ENCODE measurements at regions of chr9 and their contacts with region 1.

Region 1: DNA sequence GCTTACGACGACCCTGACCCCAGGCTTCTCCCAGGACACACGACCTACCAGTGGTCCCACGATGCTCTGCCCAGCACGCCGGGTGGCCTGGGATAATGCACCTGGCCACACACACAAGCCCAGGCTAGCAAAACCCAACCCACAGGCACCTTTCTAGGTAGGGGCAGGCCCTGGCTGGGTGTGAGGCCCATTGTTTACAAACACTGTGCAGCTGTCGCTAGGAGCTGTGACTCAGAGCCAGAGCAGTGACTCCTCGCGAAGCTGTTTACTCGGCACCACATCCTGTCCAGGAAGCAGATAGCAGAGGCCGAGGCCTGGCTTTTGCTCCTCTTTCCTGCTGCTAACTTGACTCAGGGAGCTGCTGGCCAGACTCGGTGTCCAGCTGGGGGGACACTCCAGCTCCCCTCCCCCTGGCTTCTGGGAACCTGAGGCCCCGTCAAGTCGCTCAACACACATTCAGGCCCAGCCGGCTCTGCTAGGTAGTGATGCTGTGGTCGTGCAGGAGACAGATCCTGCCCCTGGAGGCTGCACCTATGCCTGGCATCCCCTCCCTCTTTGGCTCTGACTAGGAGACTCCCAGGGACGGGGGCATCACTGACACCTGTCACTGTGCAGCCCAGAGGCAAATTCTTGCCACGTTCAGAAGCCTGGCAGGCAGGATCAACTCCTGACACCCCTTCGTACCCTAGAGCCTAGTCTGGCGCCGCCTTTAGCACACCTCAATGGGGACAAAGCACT is 12.8 kb upstream of the RALGDS start:
- DNase-seq: peak; percentile 95
- ATAC-seq: peak; percentile 81
- H3K4me3 Mint-ChIP-seq: peak overlapping the region; percentile 40
- H3K27ac Mint-ChIP-seq: peak overlapping the region; percentile 99
- H3K4me1 Mint-ChIP-seq: peaks cover 90% of the 10 kb centered on the region
- H3K27me3 Mint-ChIP-seq: no peaks in the 10 kb centered on the region

Region 2: DNA sequence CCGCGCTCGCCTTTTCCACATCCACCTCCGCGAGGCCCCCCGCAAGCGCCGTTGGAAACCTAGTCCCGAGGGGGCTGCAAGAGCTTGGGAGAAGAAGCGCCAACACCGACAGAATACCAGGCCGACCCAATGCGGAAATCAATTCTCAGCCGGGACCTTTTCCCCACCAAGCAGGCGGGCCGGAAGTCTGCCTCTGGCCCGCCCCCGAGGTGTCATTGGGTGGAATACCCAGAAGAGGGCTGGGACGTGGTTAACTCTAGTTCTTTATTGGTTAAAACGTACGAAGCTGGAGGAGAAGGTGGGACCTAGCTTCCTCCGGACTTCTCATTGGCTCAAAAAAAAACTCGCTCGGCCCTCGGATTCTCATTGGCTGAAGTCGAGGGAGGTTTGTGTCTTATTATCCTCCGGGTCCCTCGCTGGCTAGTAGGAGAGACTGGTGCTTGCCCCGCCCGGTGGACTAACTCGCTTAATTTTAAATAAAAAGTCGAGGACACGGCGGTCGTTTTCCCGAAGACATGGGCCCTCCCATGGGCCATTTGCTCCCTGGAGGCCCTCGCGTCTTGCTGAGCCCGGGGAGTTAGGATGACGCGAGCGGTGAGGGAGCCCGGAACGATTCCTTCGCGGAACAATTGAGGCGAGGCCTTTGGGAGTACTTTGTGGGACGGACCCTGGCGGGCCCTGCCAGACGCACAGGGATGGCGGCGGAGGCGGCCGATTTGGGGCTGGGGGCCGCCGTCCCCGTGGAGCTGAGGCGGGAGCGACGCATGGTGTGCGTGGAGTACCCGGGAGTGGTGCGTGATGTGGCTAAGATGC is 103.3 kb before region 1 on chr9 and contains the start of gene GTF3C5:
- CTCF ChIA-PET with region 1: no interaction called
- POLR2A ChIA-PET with region 1: interaction called, 16 read pairs
- DNase-seq: peak; percentile 96
- ATAC-seq: peak; percentile 98
- H3K4me3 Mint-ChIP-seq: peak within 1 kb of the TSS; percentile 93
- H3K27ac Mint-ChIP-seq: peak within 1 kb of the TSS; percentile 93
- H3K4me1 Mint-ChIP-seq: peaks cover 34% of the 10 kb centered on the region
- H3K27me3 Mint-ChIP-seq: no peaks in the 10 kb centered on the region
- total RNA-seq, gene GTF3C5: 89.3 to 95.7 TPM

Region 3: GRCh38 chr9:133075925-133076630 is 57.8 kb before region 1 on chr9:
- CTCF ChIA-PET with region 1: no interaction called
- POLR2A ChIA-PET with region 1: no interaction called
- DNase-seq: no peak
- ATAC-seq: no peak
- H3K4me3 Mint-ChIP-seq: no peak overlapping the region
- H3K27ac Mint-ChIP-seq: no peak overlapping the region
- H3K4me1 Mint-ChIP-seq: no peaks in the 10 kb centered on the region
- H3K27me3 Mint-ChIP-seq: peaks cover 18% of the 10 kb centered on the region

Region 4: GRCh38 chr9:133115448-133116345 is 18.2 kb before region 1 on chr9:
- CTCF ChIA-PET with region 1: interaction called, 6 read pairs
- POLR2A ChIA-PET with region 1: interaction called, 17 read pairs
- DNase-seq: peak; percentile 66
- ATAC-seq: peak; percentile 62
- H3K4me3 Mint-ChIP-seq: no peak overlapping the region
- H3K27ac Mint-ChIP-seq: peak overlapping the region; percentile 83
- H3K4me1 Mint-ChIP-seq: peaks cover 79% of the 10 kb centered on the region
- H3K27me3 Mint-ChIP-seq: no peaks in the 10 kb centered on the region

Region 5: DNA sequence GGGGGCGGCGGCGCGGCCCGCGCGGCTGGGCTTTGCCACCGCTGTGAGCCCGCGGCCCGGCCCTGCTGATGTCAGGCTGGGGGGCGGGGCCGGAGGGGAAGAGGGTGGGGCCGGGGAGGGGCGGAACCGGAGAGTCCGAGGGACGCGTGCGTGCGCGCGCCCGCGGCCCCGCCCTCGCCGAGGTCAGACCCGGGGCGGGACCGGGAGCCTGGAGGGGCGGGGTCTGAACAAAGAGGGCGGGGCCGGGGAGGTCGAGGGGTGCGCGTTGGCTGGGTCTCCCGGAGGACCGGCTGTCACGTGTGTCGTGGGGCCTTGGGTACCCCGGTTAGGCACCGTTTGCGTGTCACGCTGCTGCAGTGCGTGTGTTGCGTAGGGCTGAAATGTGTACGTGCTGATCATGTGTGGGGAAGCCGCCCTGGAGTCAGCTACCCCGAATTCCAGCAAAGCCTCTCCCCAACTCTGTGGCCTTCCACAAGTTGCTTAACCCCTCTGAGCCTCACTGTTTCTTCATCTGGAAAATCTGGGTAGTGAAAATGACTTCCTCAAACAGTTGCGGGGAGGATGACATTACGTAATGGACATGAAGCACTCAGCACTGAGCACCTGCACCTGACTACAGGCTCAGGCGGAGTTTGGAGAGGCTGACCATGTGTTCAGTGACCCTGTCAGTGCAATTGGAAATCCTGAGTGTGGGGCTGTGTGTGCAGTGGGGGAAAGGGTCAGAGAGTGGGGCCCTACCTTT is 12.5 kb before region 1 on chr9 and contains the start of gene RALGDS:
- CTCF ChIA-PET with region 1: interaction called, 10 read pairs
- POLR2A ChIA-PET with region 1: interaction called, 17 read pairs
- DNase-seq: peak; percentile 90
- ATAC-seq: peak; percentile 78
- H3K4me3 Mint-ChIP-seq: peak within 1 kb of the TSS; percentile 76
- H3K27ac Mint-ChIP-seq: peak within 1 kb of the TSS; percentile 90
- H3K4me1 Mint-ChIP-seq: peaks cover 79% of the 10 kb centered on the region
- H3K27me3 Mint-ChIP-seq: no peaks in the 10 kb centered on the region
- total RNA-seq, gene RALGDS: 85.7 to 102 TPM

Measured in activated CD8-positive, alpha-beta T cell treated with anti-CD3 and anti-CD28 coated beads, Interleukin-2, amount 10 ng/mL, durations not matched to agents 7 days and 5 days (primary cell).